ENCODE measurements at regions of chr6 and their contacts with region 1.

Region 1: GRCh38 chr6:125314019-125314581 is 12.3 kb upstream of the HDDC2 start:
- DNase-seq: peak; percentile 55
- ATAC-seq: peak; percentile 66
- H3K4me3 Mint-ChIP-seq: no peak overlapping the region
- H3K27ac Mint-ChIP-seq: no peak overlapping the region
- H3K4me1 Mint-ChIP-seq: no peaks in the 10 kb centered on the region
- H3K27me3 Mint-ChIP-seq: peaks cover 21% of the 10 kb centered on the region

Region 2: DNA sequence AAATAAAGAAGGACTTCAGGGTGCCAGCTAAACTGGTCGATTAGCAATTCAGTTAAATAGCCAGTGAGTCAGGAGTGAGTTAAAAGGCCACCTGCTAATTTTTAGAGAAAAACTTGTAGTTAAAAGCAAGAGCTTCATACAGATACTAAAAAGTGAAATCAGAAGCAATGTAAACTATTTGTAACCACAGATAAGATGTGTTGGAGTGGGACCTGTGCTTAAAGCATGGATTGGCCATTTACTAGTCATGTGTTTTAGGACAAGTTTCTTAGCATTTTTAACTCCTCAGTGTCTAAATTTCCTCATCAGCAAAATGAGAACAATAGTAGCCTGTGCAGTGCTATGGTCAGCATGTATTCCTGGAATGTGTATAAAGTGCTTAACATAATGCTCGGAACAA is 11.5 kb after region 1 on chr6:
- CTCF ChIA-PET with region 1: no interaction called
- DNase-seq: no peak
- ATAC-seq: no peak
- H3K4me3 Mint-ChIP-seq: no peak overlapping the region
- H3K27ac Mint-ChIP-seq: no peak overlapping the region
- H3K4me1 Mint-ChIP-seq: no peaks in the 10 kb centered on the region
- H3K27me3 Mint-ChIP-seq: peaks cover 28% of the 10 kb centered on the region

Region 3: GRCh38 chr6:125749173-125749864 is 435.2 kb after region 1 on chr6 and contains the start of gene HEY2:
- CTCF ChIA-PET with region 1: interaction called, 130 read pairs
- DNase-seq: peak; percentile 88
- ATAC-seq: peak; percentile 88
- H3K4me3 Mint-ChIP-seq: peak within 1 kb of the TSS; percentile 78
- H3K27ac Mint-ChIP-seq: no peak within 1 kb of the TSS
- H3K4me1 Mint-ChIP-seq: peaks cover 40% of the 10 kb centered on the region
- H3K27me3 Mint-ChIP-seq: peaks cover 83% of the 10 kb centered on the region
- total RNA-seq, gene HEY2: not detected

Region 4: DNA sequence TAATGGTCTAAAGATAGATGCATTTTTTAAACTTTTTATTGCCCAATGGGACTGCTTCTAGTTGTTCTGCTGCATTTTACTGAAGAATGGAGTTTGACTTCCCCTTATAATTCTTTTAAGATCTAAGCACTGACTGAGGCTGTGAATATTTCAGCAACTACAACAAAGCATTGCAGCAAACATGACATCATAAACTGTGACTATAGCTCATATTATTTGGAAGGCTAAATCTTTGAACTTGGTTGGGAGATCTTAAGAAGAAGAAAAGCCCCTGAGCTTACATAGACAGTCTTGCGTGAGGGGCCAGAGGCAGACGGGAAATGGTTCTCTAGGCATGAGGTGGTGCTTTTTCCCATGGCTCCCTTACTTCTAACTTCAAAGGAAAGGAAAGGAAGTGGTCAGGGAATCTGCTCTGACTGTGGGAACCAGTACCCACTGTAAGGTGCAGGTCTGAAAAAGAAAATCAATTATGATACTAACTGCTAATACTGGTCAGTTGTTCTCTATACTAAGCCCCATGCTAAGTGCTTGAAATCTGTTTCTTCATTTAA is 450.1 kb after region 1 on chr6:
- CTCF ChIA-PET with region 1: interaction called, 130 read pairs
- DNase-seq: no peak
- ATAC-seq: no peak
- H3K4me3 Mint-ChIP-seq: no peak overlapping the region
- H3K27ac Mint-ChIP-seq: no peak overlapping the region
- H3K4me1 Mint-ChIP-seq: no peaks in the 10 kb centered on the region
- H3K27me3 Mint-ChIP-seq: peaks cover 53% of the 10 kb centered on the region

Measured in activated CD8-positive, alpha-beta memory T cell treated with anti-CD3 and anti-CD28 coated beads, Interleukin-2, amount 10 ng/mL, durations not matched to agents 7 days and 5 days (primary cell).